Activated naive CD4-positive, alpha-beta T cell treated with anti-CD3 and anti-CD28 coated beads for 36 hours (primary cell): ENCODE measurements at regions of chr15 and their contacts with region 1.

Region 1: GRCh38 chr15:42608752-42609488 is 33.5 kb downstream of the STARD9 start:
- DNase-seq: peak; percentile 39
- H3K4me3 Mint-ChIP-seq: peak overlapping the region; percentile 37
- H3K27ac Mint-ChIP-seq: no peak overlapping the region
- H3K4me1 Mint-ChIP-seq: peaks cover 42% of the 10 kb centered on the region
- H3K27me3 Mint-ChIP-seq: no peaks in the 10 kb centered on the region

Region 2: GRCh38 chr15:42581272-42581730 is 27.6 kb before region 1 on chr15:
- CTCF ChIA-PET with region 1: interaction called, 3 read pairs
- intact Hi-C with region 1: loop called (anchors 1 kb)
- DNase-seq: peak; percentile 87
- H3K4me3 Mint-ChIP-seq: peak overlapping the region; percentile 77
- H3K27ac Mint-ChIP-seq: no peak overlapping the region
- H3K4me1 Mint-ChIP-seq: peaks cover 19% of the 10 kb centered on the region
- H3K27me3 Mint-ChIP-seq: peaks cover 27% of the 10 kb centered on the region

Region 3: GRCh38 chr15:42591238-42591934 is 17.5 kb before region 1 on chr15:
- CTCF ChIA-PET with region 1: no interaction called
- intact Hi-C with region 1: no loop called
- DNase-seq: no peak
- H3K4me3 Mint-ChIP-seq: no peak overlapping the region
- H3K27ac Mint-ChIP-seq: no peak overlapping the region
- H3K4me1 Mint-ChIP-seq: no peaks in the 10 kb centered on the region
- H3K27me3 Mint-ChIP-seq: no peaks in the 10 kb centered on the region

Region 4: GRCh38 chr15:42736178-42736792 is 127.4 kb after region 1 on chr15:
- CTCF ChIA-PET with region 1: no interaction called
- intact Hi-C with region 1: no loop called
- DNase-seq: no peak
- H3K4me3 Mint-ChIP-seq: peak overlapping the region; percentile 69
- H3K27ac Mint-ChIP-seq: peak overlapping the region; percentile 41
- H3K4me1 Mint-ChIP-seq: peaks cover 11% of the 10 kb centered on the region
- H3K27me3 Mint-ChIP-seq: no peaks in the 10 kb centered on the region

Region 5: GRCh38 chr15:42772144-42772543 is 163.2 kb after region 1 on chr15:
- CTCF ChIA-PET with region 1: no interaction called
- intact Hi-C with region 1: no loop called
- DNase-seq: no peak
- H3K4me3 Mint-ChIP-seq: no peak overlapping the region
- H3K27ac Mint-ChIP-seq: no peak overlapping the region
- H3K4me1 Mint-ChIP-seq: no peaks in the 10 kb centered on the region
- H3K27me3 Mint-ChIP-seq: no peaks in the 10 kb centered on the region